ENCODE measurements at regions of chr1 and their contacts with region 1.

Region 1: GRCh38 chr1:193909406-193910082 is 723.1 kb upstream of the B3GALT2 start:
- DNase-seq: peak; percentile 3 to 5
- ATAC-seq: no peak
- H3K4me3 ChIP-seq: no peak overlapping the region
- H3K27ac ChIP-seq: no peak overlapping the region
- H3K4me1 ChIP-seq: peaks cover 15% of the 10 kb centered on the region
- CTCF ChIP-seq: no peak
- EP300 ChIP-seq: no peak
- POLR2A ChIP-seq: no peak
- RAD21 ChIP-seq: no peak

Region 2: GRCh38 chr1:193831465-193831864 is 78.1 kb before region 1 on chr1:
- CTCF ChIA-PET with region 1: no interaction called
- POLR2A ChIA-PET with region 1: interaction called, 10 read pairs
- DNase-seq: no peak
- ATAC-seq: no peak
- H3K4me3 ChIP-seq: no peak overlapping the region
- H3K27ac ChIP-seq: no peak overlapping the region
- H3K4me1 ChIP-seq: no peaks in the 10 kb centered on the region
- CTCF ChIP-seq: no peak
- EP300 ChIP-seq: no peak
- POLR2A ChIP-seq: no peak
- RAD21 ChIP-seq: no peak

Region 3: DNA sequence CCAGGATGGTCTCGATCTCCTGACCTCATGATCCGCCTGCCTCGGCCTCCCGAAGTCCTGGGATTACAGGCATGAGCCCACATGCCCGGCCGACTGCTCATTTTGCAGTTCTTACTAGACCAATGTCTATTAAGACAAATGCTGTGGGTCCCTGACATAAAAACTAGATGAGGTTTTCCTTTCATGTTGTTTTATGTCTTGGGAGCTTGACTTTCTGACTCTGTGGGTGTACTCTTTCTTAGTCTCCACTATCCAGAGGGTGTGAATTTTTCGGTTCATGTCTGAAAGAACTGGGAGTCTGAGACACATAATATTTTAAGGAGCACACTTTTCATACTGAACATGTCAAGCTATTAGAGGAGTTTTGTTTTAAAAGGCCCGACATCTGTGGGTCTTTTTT is 21.8 kb after region 1 on chr1:
- CTCF ChIA-PET with region 1: no interaction called
- POLR2A ChIA-PET with region 1: no interaction called
- DNase-seq: no peak
- ATAC-seq: no peak
- H3K4me3 ChIP-seq: no peak overlapping the region
- H3K27ac ChIP-seq: no peak overlapping the region
- H3K4me1 ChIP-seq: no peaks in the 10 kb centered on the region
- CTCF ChIP-seq: no peak
- EP300 ChIP-seq: no peak
- POLR2A ChIP-seq: no peak
- RAD21 ChIP-seq: no peak

Region 4: DNA sequence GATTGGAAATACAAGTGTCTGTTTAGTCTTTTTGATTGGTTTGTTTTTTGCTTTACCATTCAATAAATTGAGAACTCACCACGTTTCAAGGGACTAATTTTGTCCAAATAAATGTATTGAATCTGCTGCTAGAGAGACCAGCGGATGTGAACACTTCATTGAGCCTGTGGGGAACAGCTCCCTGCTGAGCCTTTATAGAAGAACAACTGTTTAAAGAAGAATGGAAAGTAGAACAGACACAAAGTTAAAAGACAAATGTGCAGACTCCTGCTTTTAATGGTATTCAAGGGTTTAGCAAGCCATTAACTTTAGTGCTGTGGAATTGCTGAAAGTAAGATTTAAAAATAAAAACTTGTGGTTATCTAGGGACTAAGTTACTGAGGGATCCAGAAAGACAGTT is 94.6 kb after region 1 on chr1:
- CTCF ChIA-PET with region 1: no interaction called
- POLR2A ChIA-PET with region 1: no interaction called
- DNase-seq: no peak
- ATAC-seq: no peak
- H3K4me3 ChIP-seq: no peak overlapping the region
- H3K27ac ChIP-seq: no peak overlapping the region
- H3K4me1 ChIP-seq: no peaks in the 10 kb centered on the region
- CTCF ChIP-seq: no peak
- EP300 ChIP-seq: no peak
- POLR2A ChIP-seq: no peak
- RAD21 ChIP-seq: no peak

Measured in A549 (cell line).